Activated naive CD4-positive, alpha-beta T cell treated with anti-CD3 and anti-CD28 coated beads for 36 hours (primary cell): ENCODE measurements at regions of chr9 and their contacts with region 1.

Region 1: GRCh38 chr9:127004946-127005769 is 90.6 kb downstream of the RALGPS1 start:
- DNase-seq: peak; percentile 91
- H3K4me3 Mint-ChIP-seq: no peak overlapping the region
- H3K27ac Mint-ChIP-seq: peak overlapping the region; percentile 76
- H3K4me1 Mint-ChIP-seq: peaks cover 21% of the 10 kb centered on the region
- H3K27me3 Mint-ChIP-seq: peaks cover 34% of the 10 kb centered on the region

Region 2: GRCh38 chr9:127049044-127049443 is 43.9 kb after region 1 on chr9:
- CTCF ChIA-PET with region 1: no interaction called
- intact Hi-C with region 1: loop called (anchors 1 kb)
- DNase-seq: peak; percentile 64
- H3K4me3 Mint-ChIP-seq: no peak overlapping the region
- H3K27ac Mint-ChIP-seq: no peak overlapping the region
- H3K4me1 Mint-ChIP-seq: peaks cover 16% of the 10 kb centered on the region
- H3K27me3 Mint-ChIP-seq: no peaks in the 10 kb centered on the region

Region 3: GRCh38 chr9:127316586-127317323 is 311.6 kb after region 1 on chr9:
- CTCF ChIA-PET with region 1: no interaction called
- intact Hi-C with region 1: loop called (anchors 2 kb)
- DNase-seq: peak; percentile 55
- H3K4me3 Mint-ChIP-seq: no peak overlapping the region
- H3K27ac Mint-ChIP-seq: no peak overlapping the region
- H3K4me1 Mint-ChIP-seq: peaks cover 18% of the 10 kb centered on the region
- H3K27me3 Mint-ChIP-seq: peaks cover 14% of the 10 kb centered on the region

Region 4: GRCh38 chr9:127396808-127397497 is 391.8 kb after region 1 on chr9 and contains the start of gene SLC2A8:
- CTCF ChIA-PET with region 1: no interaction called
- intact Hi-C with region 1: no loop called
- DNase-seq: peak; percentile 92
- H3K4me3 Mint-ChIP-seq: peak within 1 kb of the TSS; percentile 61
- H3K27ac Mint-ChIP-seq: no peak within 1 kb of the TSS
- H3K4me1 Mint-ChIP-seq: peaks cover 9% of the 10 kb centered on the region
- H3K27me3 Mint-ChIP-seq: peaks cover 74% of the 10 kb centered on the region
- total RNA-seq, gene SLC2A8: 3.4 TPM